Vagina (tissue), 2 donors: ENCODE measurements at regions of chr6 and their contacts with region 1.

Region 1: DNA sequence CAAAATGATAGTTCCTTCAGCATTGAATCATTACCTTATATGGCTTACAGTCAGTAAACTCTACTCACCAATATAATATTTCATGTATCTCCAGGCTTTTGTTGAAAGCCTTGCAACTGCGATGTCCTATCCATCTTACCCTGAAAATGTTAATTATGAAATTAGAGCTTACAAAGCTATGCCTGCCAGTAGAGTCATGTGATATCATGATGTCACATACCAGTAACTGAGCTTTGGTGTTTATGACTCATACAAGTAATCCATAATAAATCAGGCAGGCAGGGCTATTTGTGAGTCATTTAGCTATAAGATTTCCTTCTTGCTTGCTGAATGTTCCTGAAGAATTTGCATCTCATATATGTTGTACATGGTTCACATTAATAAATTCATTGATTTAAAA is 44.9 kb upstream of the FAM83B start:
- DNase-seq: no peak
- H3K4me3 ChIP-seq: no peak overlapping the region
- H3K27ac ChIP-seq: no peak overlapping the region
- H3K4me1 ChIP-seq: no peaks in the 10 kb centered on the region
- H3K27me3 ChIP-seq: no peaks in the 10 kb centered on the region
- CTCF ChIP-seq: no peak
- POLR2A ChIP-seq: no peak

Region 2: DNA sequence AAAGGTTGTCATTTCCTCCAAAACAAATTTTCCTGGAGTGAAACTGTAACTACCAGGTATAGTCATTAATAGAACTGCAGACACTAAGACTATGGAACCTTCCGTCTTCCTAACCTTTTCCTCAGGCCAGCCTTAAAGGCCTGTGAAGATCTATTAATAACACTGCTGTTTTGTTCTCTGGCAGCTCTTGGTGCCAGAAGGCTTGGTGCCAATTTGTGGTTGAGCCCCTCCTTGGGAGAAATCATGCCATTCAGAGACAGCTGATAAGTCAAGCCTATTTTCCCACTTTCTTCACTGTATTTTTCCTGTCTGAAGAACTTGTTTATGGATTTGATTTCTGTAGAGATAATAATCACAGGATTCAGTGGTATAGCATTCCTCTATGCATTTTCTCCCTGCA is 437.4 kb after region 1 on chr6:
- intact Hi-C with region 1: loop called (anchors 10 kb)
- DNase-seq: no peak
- H3K4me3 ChIP-seq: no peak overlapping the region
- H3K27ac ChIP-seq: no peak overlapping the region
- H3K4me1 ChIP-seq: no peaks in the 10 kb centered on the region
- H3K27me3 ChIP-seq: no peaks in the 10 kb centered on the region
- CTCF ChIP-seq: no peak
- POLR2A ChIP-seq: no peak